ENCODE measurements at regions of chr4 and their contacts with region 1.

Region 1: DNA sequence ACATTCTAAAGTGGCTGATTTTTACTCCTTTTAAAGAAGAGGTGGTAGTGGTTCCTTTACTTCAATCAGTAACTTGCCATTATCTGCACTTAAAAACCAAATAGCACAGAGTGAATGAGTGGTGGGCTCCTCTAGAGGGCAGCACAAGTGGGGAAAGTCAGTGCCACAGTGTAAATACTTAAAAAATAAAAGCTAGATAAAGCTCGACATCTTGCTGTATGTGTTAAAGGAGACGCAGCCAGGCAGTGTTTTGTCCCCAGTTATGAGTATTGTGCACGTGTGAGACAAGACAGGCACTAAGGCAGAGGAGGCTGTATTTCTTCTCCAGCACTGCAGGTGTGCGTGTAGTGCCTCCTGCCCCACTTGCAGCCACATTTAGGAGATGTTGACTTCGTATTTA is 24.6 kb downstream of the NAP1L5 start:
- DNase-seq: peak; percentile 65
- H3K4me3 ChIP-seq: no peak overlapping the region
- H3K27ac ChIP-seq: no peak overlapping the region
- H3K4me1 ChIP-seq: no peaks in the 10 kb centered on the region
- H3K27me3 ChIP-seq: no peaks in the 10 kb centered on the region
- CTCF ChIP-seq: peak; percentile 56 to 74
- POLR2A ChIP-seq: no peak

Region 2: DNA sequence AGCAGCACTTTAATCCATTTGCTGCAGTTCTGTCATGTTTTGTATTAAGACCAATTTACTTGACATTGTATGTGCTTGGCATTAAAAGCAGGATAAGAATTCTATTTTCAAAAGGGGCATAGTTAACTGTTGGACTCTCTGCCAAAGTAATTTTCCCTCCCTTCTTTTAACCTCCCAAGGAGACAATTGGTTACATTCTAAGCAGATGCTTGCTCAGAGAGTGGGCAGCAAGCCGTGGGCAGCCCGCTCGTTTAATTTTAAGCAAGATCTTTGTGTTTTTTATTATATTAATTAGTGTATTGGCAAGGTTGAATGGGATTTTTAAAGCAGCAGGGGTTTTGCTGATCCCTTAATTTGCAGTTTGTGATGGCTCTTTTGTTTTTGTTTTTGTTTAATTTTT is 1415.5 kb before region 1 on chr4:
- CTCF ChIA-PET with region 1: no interaction called
- POLR2A ChIA-PET with region 1: no interaction called
- dilution Hi-C with region 1: no loop called
- intact Hi-C with region 1: no loop called
- DNase-seq: no peak
- H3K4me3 ChIP-seq: no peak overlapping the region
- H3K27ac ChIP-seq: no peak overlapping the region
- H3K4me1 ChIP-seq: no peaks in the 10 kb centered on the region
- H3K27me3 ChIP-seq: peaks cover 0 to 2% of the 10 kb centered on the region in 2 experiments
- CTCF ChIP-seq: no peak
- POLR2A ChIP-seq: no peak

Region 3: GRCh38 chr4:88653371-88653946 is 19.5 kb before region 1 on chr4:
- CTCF ChIA-PET with region 1: no interaction called
- POLR2A ChIA-PET with region 1: no interaction called
- dilution Hi-C with region 1: no loop called
- intact Hi-C with region 1: no loop called
- DNase-seq: no peak
- H3K4me3 ChIP-seq: no peak overlapping the region
- H3K27ac ChIP-seq: no peak overlapping the region
- H3K4me1 ChIP-seq: no peaks in the 10 kb centered on the region
- H3K27me3 ChIP-seq: no peaks in the 10 kb centered on the region
- CTCF ChIP-seq: no peak
- POLR2A ChIP-seq: no peak

Region 4: GRCh38 chr4:88706574-88706973 is 33.6 kb after region 1 on chr4:
- CTCF ChIA-PET with region 1: interaction called, 10 read pairs
- POLR2A ChIA-PET with region 1: no interaction called
- dilution Hi-C with region 1: no loop called
- intact Hi-C with region 1: no loop called
- DNase-seq: peak; percentile 67
- H3K4me3 ChIP-seq: no peak overlapping the region
- H3K27ac ChIP-seq: no peak overlapping the region
- H3K4me1 ChIP-seq: no peaks in the 10 kb centered on the region
- H3K27me3 ChIP-seq: no peaks in the 10 kb centered on the region
- CTCF ChIP-seq: peak; percentile 32 to 58
- POLR2A ChIP-seq: no peak

Region 5: GRCh38 chr4:88802138-88802537 is 129.2 kb after region 1 on chr4:
- CTCF ChIA-PET with region 1: interaction called, 14 read pairs
- POLR2A ChIA-PET with region 1: no interaction called
- dilution Hi-C with region 1: no loop called
- intact Hi-C with region 1: no loop called
- DNase-seq: no peak
- H3K4me3 ChIP-seq: no peak overlapping the region
- H3K27ac ChIP-seq: no peak overlapping the region
- H3K4me1 ChIP-seq: no peaks in the 10 kb centered on the region
- H3K27me3 ChIP-seq: no peaks in the 10 kb centered on the region
- CTCF ChIP-seq: no peak
- POLR2A ChIP-seq: no peak

Measured in endothelial cell of umbilical vein (primary cell).